ENCODE measurements at regions of chr3 and their contacts with region 1.

Region 1: DNA sequence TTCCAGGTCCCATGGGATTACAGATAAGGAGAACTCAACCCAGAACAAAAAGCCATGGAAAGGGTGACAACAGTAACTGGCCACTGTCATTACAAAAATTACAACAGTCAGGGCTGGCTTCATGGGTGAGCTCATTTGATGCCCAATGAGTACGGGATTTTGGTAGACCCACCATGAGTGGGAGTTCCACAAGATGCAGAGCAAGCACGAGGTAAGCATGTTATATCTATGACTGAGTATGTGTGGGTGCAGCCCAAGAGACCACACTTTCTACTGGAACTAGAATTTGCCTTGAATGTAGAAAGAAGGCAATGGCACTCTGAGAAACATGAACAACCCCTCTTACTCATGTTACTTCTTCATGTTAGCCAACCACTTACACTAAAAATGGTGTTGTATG is 83.3 kb downstream of the IGF2BP2 start:
- DNase-seq: no peak
- ATAC-seq: no peak
- H3K4me3 ChIP-seq: no peak overlapping the region
- H3K27ac ChIP-seq: no peak overlapping the region
- H3K4me1 ChIP-seq: peaks cover 0 to 25% (median 0%) of the 10 kb centered on the region in 9 donors
- H3K27me3 ChIP-seq: no peaks in the 10 kb centered on the region
- CTCF ChIP-seq: no peak

Region 2: DNA sequence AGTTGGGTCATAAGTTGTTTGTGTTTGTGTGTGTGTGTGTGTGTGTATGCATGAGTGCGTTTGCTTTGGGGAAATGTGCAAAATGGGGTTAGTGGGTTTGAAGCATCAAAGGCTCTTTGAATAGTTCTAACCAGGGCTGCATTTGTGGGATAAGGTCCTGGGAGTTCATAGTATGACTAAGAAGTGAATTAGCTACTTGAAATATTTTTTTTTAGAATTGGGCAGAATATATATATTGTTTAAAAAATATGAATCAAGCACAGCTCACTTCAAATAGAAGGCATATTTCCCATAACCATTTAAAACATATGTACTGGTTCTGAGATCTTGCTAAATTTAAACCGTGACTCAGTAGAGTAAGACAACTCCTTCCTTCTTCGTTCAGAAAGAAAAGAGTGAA is 40.2 kb after region 1 on chr3:
- intact Hi-C with region 1: loop called in 1 of 10 experiments (anchors 2 kb)
- DNase-seq: no peak
- ATAC-seq: no peak
- H3K4me3 ChIP-seq: no peak overlapping the region
- H3K27ac ChIP-seq: no peak overlapping the region
- H3K4me1 ChIP-seq: peaks cover 0 to 18% (median 4%) of the 10 kb centered on the region in 9 donors
- H3K27me3 ChIP-seq: no peaks in the 10 kb centered on the region
- CTCF ChIP-seq: no peak